ENCODE measurements at regions of chr9 and their contacts with region 1.

Region 1: GRCh38 chr9:13962006-13962405 is 351.9 kb downstream of the NFIB start:
- DNase-seq: no peak
- ATAC-seq: no peak
- H3K4me3 ChIP-seq: no peak overlapping the region
- H3K27ac ChIP-seq: no peak overlapping the region
- H3K4me1 ChIP-seq: no peaks in the 10 kb centered on the region
- H3K27me3 ChIP-seq: no peaks in the 10 kb centered on the region
- CTCF ChIP-seq: no peak

Region 2: DNA sequence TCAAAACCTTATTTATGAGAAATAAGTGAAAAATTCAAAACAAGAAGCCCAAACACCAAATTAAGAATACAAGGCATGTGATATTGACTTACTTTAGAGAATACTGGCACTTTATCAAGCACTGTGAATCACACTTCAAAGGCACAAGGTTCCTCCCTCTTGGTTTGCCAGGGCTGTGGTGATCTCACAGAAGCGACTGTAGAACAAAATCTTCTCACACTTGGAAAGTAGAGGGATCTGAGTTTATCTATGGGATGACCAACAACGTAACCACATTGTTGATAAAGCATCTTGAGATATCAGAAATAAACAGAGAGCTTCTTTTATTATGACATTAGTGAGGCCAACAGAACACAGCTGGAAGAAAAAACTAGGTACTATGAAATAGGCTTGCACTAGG is 56.1 kb after region 1 on chr9:
- intact Hi-C with region 1: loop called in 1 of 2 experiments (anchors 10 kb)
- DNase-seq: no peak
- ATAC-seq: peak; percentile 50
- H3K4me3 ChIP-seq: no peak overlapping the region
- H3K27ac ChIP-seq: no peak overlapping the region
- H3K4me1 ChIP-seq: peaks cover 0 to 3% of the 10 kb centered on the region in 2 donors
- H3K27me3 ChIP-seq: no peaks in the 10 kb centered on the region
- CTCF ChIP-seq: no peak